Activated CD4-positive, alpha-beta memory T cell treated with anti-CD3 and anti-CD28 coated beads, Interleukin-2, amount 10 ng/mL, durations not matched to agents 7 days and 5 days (primary cell): ENCODE measurements at regions of chr1 and their contacts with region 1.

Region 1: GRCh38 chr1:151292207-151293030 is 10.3 kb downstream of the ZNF687 start:
- DNase-seq: no peak
- H3K4me3 Mint-ChIP-seq: no peak overlapping the region
- H3K27ac Mint-ChIP-seq: peak overlapping the region; percentile 31
- H3K4me1 Mint-ChIP-seq: peaks cover 4% of the 10 kb centered on the region
- H3K27me3 Mint-ChIP-seq: no peaks in the 10 kb centered on the region

Region 2: DNA sequence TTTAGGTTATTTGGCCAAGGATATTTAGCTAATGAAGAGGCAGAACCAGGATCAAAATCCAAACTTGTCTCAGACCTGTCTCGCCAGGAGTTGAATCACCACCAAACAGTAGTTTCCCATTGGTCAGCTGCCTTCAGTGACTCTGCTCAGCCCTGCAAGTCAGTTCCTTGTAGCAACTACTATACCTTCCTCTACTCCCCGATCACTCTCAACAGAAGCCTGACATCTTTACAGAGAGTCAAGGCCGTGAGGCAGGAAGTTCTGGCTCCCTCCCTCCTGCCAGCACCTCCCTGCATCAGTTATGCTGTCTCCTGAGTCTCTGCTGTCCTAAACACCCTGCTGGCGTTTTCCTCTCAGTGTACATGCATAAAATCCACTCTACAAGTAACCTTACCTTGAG is 24.7 kb before region 1 on chr1:
- CTCF ChIA-PET with region 1: no interaction called
- POLR2A ChIA-PET with region 1: no interaction called
- DNase-seq: no peak
- H3K4me3 Mint-ChIP-seq: no peak overlapping the region
- H3K27ac Mint-ChIP-seq: no peak overlapping the region
- H3K4me1 Mint-ChIP-seq: peaks cover 2% of the 10 kb centered on the region
- H3K27me3 Mint-ChIP-seq: no peaks in the 10 kb centered on the region

Region 3: DNA sequence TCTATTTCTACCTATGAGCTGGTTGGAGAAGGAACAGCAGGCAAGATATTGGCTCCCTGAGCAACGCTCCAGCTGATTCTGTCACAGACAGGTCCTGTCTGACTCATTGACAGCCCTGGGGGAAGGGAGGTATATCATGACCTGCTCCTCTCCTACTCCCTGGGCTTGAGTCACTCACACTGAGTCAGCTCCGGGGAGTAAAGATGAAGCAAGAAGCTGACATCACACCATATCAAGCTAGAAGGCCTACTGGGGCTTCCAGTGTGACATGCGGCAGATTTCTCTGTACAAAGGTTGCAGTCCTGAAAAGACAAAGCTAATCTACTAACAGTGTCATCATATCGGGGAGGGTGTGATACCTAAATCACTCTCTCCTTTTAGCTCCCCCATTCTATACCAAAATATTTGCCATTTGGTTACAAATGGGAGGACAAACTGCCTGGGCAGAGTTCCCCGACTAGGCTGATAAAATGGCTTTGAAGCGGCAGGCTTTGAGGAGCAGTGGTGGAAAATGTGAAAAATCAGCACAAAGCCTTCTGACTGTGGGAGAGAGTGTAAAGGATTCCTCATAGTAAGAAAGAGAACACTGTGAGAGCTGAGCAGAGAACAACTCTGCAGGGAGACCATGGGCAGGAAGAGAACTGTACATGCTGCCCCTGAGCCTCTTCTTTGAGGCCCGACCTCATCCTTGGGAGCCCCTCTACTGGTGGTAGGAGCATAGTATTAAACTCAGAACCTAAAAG is 19.3 kb after region 1 on chr1:
- CTCF ChIA-PET with region 1: interaction called, 8 read pairs
- POLR2A ChIA-PET with region 1: interaction called, 18 read pairs
- DNase-seq: peak; percentile 80
- H3K4me3 Mint-ChIP-seq: no peak overlapping the region
- H3K27ac Mint-ChIP-seq: peak overlapping the region; percentile 86
- H3K4me1 Mint-ChIP-seq: peaks cover 23% of the 10 kb centered on the region
- H3K27me3 Mint-ChIP-seq: no peaks in the 10 kb centered on the region